ENCODE measurements at regions of chr2 and their contacts with region 1.

Region 1: GRCh38 chr2:112749755-112750559 is 14.5 kb downstream of the CKAP2L start:
- DNase-seq: peak; percentile 73
- CTCF ChIP-seq: peak; percentile 96

Region 2: GRCh38 chr2:112846031-112846430 is 96.1 kb after region 1 on chr2:
- in situ Hi-C with region 1: no loop called
- DNase-seq: no peak
- CTCF ChIP-seq: no peak

Region 3: GRCh38 chr2:112884869-112885505 is 135.0 kb after region 1 on chr2:
- in situ Hi-C with region 1: loop called (anchors 5 kb)
- DNase-seq: peak; percentile 85
- CTCF ChIP-seq: peak; percentile 89

Region 4: GRCh38 chr2:112947374-112947773 is 197.4 kb after region 1 on chr2:
- in situ Hi-C with region 1: loop called (anchors 5 kb)
- DNase-seq: no peak
- CTCF ChIP-seq: no peak

Measured in GM13976 (cell line).